RWPE1 (cell line): ENCODE measurements at regions of chr9 and their contacts with region 1.

Region 1: DNA sequence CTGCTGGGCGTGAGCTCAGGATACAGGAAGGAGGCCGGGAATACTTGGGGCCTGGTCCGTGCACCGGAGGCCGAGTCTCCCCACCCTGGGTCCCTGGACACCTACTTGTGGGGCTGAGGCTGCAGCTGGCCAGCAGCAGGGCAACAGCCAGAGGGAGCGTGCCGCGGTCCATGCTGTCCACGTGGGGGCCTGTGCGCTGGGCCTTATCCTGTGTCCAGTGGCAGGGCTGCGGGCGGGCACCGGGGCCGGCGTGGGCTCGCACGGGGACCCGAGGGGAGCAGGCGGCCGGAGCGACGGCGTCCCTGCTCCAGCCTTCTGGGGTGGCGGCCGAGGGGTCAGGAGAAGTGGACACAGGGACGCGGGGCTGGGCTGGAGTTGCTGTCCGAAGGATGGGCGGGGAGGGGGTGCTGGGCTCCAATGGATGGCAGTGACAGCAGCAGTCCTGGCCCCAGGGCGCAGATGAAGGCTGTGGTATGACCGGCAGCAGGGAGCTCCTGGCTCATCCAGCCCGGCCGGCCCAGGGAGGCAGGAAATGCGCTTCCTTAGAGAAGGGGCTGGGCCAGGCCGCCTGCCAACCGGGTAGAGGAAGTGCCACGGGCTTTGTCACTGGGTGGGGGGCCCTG is at the start of gene ENG:
- DNase-seq: peak; percentile 64
- H3K27ac ChIP-seq: peak within 1 kb of the TSS; percentile 71
- CTCF ChIP-seq: no peak

Region 2: DNA sequence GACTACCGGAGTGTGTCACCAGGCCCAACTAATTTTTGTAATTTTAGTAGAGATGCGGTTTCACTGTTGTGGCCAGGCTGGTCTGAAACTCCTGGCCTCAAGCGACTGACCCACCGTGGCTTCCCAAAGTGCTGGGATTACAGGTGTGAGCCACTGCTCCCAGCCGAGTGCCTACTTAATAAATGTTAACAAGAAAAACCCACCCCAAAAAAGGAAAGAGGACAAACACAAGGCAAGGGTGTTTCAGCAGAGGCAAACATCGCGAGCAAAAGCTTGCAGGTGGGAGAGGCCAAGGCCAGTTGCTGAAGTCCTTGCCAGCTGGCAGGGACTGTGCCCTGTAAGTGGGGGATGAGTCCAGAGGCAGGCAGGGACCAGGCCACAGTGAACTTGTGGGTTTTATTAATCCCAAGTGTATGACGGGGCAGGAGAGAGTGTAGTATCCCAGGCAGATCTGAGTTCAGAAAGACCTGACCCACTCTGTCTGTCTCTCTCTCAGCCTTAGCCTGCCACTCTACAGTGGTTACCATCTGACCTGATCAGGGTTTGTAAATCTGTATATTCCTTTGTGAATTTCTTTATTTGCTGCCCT is 58.0 kb before region 1 on chr9:
- CTCF ChIA-PET with region 1: no interaction called
- POLR2A ChIA-PET with region 1: interaction called, 12 read pairs
- DNase-seq: no peak
- H3K27ac ChIP-seq: peak overlapping the region; percentile 72
- CTCF ChIP-seq: no peak

Region 3: GRCh38 chr9:127833555-127833954 is 20.7 kb before region 1 on chr9:
- CTCF ChIA-PET with region 1: no interaction called
- POLR2A ChIA-PET with region 1: interaction called, 11 read pairs
- DNase-seq: no peak
- H3K27ac ChIP-seq: no peak overlapping the region
- CTCF ChIP-seq: no peak

Region 4: DNA sequence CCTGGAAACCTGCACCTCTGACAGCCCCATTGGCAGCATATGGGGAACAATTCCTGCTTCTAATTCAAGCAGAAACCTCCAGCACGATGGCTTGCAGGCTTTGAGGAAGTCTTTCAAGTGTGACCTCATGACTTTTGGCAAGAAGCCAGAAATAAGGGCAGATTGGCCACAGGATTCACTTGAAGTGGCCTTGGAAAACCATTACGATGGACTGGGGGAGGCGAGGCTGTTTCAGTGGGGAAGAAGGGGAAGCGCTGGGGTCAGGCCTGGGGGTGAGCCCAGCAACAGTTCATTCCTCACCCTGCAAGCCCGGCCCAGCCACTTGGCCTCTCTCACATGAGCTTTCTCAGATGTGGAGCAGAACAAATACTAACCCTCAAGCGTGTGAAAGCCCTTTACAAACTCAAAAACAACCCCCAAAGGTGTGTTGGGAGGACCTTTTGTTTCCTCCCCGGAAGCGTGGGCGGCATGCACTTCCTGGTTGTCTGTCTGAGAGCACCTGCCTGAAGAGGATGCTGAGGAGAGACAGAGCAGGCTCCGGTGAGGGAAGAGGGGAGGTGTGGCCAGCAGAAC is 153.4 kb after region 1 on chr9:
- CTCF ChIA-PET with region 1: no interaction called
- POLR2A ChIA-PET with region 1: no interaction called
- DNase-seq: no peak
- H3K27ac ChIP-seq: no peak overlapping the region
- CTCF ChIP-seq: no peak